ENCODE measurements at regions of chr16 and their contacts with region 1.

Region 1: DNA sequence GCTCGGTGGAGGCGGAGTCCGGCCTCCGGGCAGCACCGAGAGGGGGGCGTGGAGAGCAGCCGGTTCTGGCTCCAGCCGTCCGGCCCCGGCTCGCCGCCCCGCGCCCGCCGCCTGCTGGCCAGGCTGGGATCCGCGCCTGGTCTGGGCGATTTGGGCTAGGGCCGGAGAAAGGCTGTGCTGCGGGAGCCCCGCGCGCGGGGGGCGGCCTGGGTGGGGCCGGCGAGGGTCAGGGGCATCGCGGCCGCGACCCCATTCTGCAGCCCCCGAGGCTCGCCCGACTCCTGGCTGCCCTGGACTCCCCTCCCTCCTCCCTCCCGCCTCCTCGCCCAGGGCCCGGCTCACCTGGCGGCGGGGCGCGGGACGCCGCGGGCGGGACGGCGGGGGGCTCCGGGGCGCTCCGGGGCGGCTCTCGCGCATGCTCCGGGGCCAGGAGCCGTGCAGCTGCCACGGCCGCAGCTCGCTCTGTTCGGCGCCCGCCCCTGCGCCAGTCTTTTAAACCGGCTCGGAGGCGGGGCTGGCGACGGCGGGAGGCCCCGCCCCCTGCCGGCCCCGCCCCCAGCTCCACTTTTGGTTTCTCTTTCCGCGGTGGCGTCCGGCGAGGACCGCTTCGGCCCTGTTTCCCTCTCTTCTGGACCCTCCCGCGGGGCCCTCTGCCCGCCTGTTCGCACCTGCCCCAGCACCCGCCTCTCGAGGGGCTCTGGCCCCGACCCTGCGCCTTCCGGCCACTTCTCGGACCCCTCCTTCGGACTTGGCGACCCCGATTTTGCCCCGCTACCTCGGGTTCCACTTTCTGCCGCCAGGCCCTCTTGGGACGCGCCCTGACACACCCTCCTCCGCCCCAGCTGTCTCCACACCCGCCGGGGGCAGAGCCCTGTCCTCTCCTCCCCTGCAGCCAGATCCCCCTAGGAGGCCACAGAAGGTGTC is at the start of gene SOCS1:
- DNase-seq: peak; percentile 78
- H3K4me3 ChIP-seq: peak within 1 kb of the TSS; percentile 43 to 89 (median 73)
- H3K27ac ChIP-seq: peak within 1 kb of the TSS; percentile 31
- H3K4me1 ChIP-seq: peaks cover 10% of the 10 kb centered on the region
- H3K27me3 ChIP-seq: peaks cover 0 to 1% of the 10 kb centered on the region in 2 experiments
- CTCF ChIP-seq: peak; percentile 76 to 86
- POLR2A ChIP-seq: peak; percentile 97
- total RNA-seq, gene SOCS1: 0.81 and 1.1 TPM in 2 replicates

Region 2: DNA sequence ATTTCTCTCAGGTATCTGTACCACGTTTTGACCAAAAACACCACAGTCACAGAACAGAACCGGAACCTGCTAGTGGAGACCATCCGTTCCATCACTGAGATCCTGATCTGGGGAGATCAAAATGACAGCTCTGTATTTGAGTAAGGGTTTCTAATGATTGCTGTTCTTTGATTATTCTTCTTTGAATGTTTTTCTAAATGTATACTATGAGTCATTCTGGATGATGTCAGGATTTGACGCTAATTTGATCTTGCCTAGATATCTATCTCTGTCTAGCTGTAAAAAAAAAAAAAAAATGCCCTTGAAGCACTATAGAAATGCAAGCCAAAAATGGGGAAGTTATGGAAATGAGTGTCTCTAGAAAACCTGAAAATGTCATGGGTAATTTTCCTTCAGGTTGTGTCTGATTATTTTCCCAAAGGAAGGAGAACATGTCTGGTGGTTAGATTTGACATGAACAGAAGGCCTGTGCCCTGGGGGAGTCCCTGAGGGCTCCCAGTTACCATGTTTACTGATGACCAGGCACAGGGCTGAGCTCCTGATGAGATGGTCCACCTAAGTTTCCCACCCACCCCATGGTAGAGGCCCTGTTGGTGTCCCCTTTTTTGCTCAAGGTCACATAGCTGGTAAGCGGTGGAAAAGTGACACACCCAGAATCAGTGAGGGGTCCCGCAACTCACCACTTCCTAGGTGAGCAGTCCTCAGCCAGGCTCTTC is 298.1 kb before region 1 on chr16:
- CTCF ChIA-PET with region 1: interaction called, 347 read pairs
- POLR2A ChIA-PET with region 1: interaction called, 22 read pairs
- dilution Hi-C with region 1: no loop called
- intact Hi-C with region 1: loop called (anchors 1 kb)
- DNase-seq: peak; percentile 66
- H3K4me3 ChIP-seq: no peak overlapping the region
- H3K27ac ChIP-seq: peak overlapping the region; percentile 40
- H3K4me1 ChIP-seq: peaks cover 37% of the 10 kb centered on the region
- H3K27me3 ChIP-seq: no peaks in the 10 kb centered on the region
- CTCF ChIP-seq: no peak
- POLR2A ChIP-seq: no peak

Region 3: DNA sequence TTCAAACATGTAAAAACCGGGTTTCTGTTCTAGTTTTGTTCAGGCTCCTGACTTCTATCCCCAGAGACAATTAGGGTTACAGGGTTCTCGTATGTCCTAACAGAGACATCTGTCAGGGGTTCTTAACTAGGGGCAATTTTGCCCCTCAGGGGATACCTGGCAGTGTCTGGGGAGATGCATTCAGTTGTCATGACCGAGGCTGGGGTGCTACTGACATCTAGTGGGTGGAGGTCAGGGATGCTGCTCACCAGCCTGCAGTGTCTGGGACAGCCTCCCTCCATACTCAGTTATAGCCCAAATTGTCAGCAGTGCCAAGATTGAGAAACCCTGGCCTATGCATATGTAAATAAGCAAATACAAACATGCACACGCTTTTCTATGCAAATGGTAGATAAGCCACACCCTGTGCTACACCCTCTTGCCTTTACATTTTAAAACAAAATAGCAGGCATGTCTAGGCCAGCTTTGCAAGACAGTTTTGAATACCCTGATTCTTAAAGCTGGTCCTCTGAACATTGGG is 274.2 kb before region 1 on chr16:
- CTCF ChIA-PET with region 1: interaction called, 17 read pairs
- POLR2A ChIA-PET with region 1: interaction called, 4 read pairs
- dilution Hi-C with region 1: no loop called
- intact Hi-C with region 1: no loop called
- DNase-seq: no peak
- H3K4me3 ChIP-seq: no peak overlapping the region
- H3K27ac ChIP-seq: no peak overlapping the region
- H3K4me1 ChIP-seq: peaks cover 13% of the 10 kb centered on the region
- H3K27me3 ChIP-seq: no peaks in the 10 kb centered on the region
- CTCF ChIP-seq: peak; percentile 23 to 24
- POLR2A ChIP-seq: no peak

Region 4: DNA sequence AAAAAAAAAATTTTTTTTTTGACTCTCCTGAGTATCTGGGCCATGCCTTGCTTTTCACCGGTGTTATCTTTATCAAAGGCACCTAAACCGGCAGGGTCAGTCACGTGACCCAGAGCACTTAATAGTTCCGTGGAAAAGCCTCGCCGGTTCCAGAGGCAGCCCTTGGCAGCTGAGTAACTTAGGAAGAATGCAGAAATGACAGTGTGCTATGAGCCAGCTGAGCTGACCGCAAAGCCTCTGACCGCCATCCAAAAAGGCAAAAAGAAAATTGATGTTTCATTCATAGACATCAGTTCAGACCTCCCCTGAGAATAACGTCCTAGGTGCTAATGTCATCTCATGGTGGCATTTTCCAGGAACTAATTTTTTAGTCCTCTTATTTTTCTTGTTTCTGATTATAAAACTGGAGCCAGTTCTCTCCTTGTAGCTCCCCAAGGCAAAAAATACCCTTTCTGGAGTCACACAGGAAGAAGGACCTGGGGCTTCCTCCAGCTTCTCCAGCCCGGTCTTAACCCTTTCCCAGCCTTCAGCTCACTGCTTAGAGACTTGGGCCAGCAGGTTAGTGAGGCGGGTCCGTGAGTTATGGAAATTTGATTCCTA is 122.6 kb before region 1 on chr16:
- CTCF ChIA-PET with region 1: interaction called, 9 read pairs
- POLR2A ChIA-PET with region 1: interaction called, 4 read pairs
- dilution Hi-C with region 1: no loop called
- intact Hi-C with region 1: loop called (anchors 2 kb)
- DNase-seq: peak; percentile 83
- H3K4me3 ChIP-seq: no peak overlapping the region
- H3K27ac ChIP-seq: peak overlapping the region; percentile 62
- H3K4me1 ChIP-seq: peaks cover 27% of the 10 kb centered on the region
- H3K27me3 ChIP-seq: no peaks in the 10 kb centered on the region
- CTCF ChIP-seq: no peak
- POLR2A ChIP-seq: no peak

Region 5: DNA sequence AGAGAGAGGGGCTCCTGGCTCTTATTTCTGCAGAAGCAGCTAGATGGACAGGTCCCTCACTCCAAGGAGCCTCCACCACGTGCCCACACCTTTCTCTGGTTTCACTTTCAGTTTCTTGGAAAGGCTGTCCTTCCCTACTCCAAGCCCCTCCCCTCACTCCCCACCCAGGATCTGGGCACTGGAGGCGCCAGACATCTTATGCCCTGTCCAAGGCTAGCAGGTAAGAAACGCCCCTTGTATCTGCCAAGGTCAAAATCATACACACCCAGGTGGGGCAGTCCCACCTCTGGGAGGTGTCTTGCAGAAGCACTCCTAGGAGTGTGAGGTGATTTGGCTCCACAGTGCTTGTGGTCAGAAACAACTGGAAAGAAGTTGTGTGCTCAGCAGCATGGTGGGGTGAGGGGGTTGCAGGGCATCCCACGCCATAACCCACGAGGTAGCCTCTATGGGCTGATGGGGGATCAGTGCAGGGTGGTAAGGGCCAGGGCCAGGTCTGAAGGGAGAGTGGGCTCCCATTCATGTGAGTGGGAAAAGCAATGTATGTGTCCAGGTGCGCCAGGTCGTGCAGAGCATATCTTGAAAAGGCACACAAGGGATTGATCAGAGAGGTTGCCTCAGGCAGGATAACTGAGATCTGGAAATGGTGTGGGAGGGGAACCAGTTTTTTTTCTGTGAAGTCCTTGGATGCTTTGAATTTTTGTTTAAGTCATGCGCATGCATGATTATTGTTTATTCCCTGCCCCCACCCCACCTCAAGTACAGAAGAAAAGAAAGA is 56.9 kb after region 1 on chr16:
- CTCF ChIA-PET with region 1: interaction called, 4 read pairs
- POLR2A ChIA-PET with region 1: no interaction called
- dilution Hi-C with region 1: no loop called
- intact Hi-C with region 1: loop called (anchors 10 kb)
- DNase-seq: no peak
- H3K4me3 ChIP-seq: no peak overlapping the region
- H3K27ac ChIP-seq: no peak overlapping the region
- H3K4me1 ChIP-seq: no peaks in the 10 kb centered on the region
- H3K27me3 ChIP-seq: no peaks in the 10 kb centered on the region
- CTCF ChIP-seq: no peak
- POLR2A ChIP-seq: no peak

Region 6: GRCh38 chr16:11667824-11668622 is 412.0 kb after region 1 on chr16 and contains the start of gene SNN:
- CTCF ChIA-PET with region 1: no interaction called
- POLR2A ChIA-PET with region 1: no interaction called
- dilution Hi-C with region 1: no loop called
- intact Hi-C with region 1: loop called (anchors 5 kb)
- DNase-seq: peak; percentile 79
- H3K4me3 ChIP-seq: peak within 1 kb of the TSS; percentile 33 to 72 (median 42)
- H3K27ac ChIP-seq: no peak within 1 kb of the TSS
- H3K4me1 ChIP-seq: peaks cover 13% of the 10 kb centered on the region
- H3K27me3 ChIP-seq: no peaks in the 10 kb centered on the region
- CTCF ChIP-seq: no peak
- POLR2A ChIP-seq: peak; percentile 41
- total RNA-seq, gene SNN: 20.7 and 24.1 TPM in 2 replicates

Measured in endothelial cell of umbilical vein (primary cell).